Transverse colon (tissue), 4 donors: ENCODE measurements at regions of chr18 and their contacts with region 1.

Region 1: GRCh38 chr18:6885992-6886796 is 156.7 kb downstream of the ARHGAP28 start:
- DNase-seq: peak; percentile 14
- H3K4me3 ChIP-seq: no peak overlapping the region
- H3K27ac ChIP-seq: no peak overlapping the region
- H3K4me1 ChIP-seq: peaks cover 0 to 4% (median 0%) of the 10 kb centered on the region in 4 donors
- H3K27me3 ChIP-seq: no peaks in the 10 kb centered on the region
- CTCF ChIP-seq: peak; percentile 51 to 61 (median 57)
- EP300 ChIP-seq: no peak
- POLR2A ChIP-seq: no peak

Region 2: DNA sequence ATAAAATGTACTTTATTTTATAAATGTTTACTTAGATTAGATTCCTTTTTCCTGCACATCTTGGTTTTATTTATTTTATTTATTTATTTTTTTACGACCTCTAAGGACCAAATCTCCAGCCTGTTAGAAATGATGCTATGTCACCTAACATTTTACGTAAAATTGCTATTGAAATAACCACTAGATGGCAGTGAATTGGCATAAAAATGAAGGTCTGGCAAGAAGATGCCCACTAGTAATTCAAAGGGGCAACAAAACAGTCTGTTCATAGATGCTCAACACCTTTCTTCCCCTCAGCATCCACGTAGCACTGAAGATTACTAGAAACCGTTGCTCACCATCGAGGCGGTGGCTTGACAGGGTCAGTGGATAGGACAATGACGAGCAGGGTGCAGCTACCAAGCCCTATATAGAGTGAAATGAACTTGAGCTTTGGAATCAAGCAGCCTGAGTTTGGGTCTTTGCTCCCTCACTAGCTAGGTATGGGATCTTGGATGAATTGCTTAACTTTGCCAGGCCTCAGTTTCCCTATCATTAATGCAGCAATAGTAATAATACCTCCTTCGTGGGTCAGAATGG is 342.8 kb before region 1 on chr18:
- in situ Hi-C with region 1: loop called in 3 of 4 experiments (anchors 10 to 25 kb)
- intact Hi-C with region 1: loop called (anchors 2 kb)
- DNase-seq: no peak
- H3K4me3 ChIP-seq: no peak overlapping the region
- H3K27ac ChIP-seq: no peak overlapping the region
- H3K4me1 ChIP-seq: no peaks in the 10 kb centered on the region
- H3K27me3 ChIP-seq: no peaks in the 10 kb centered on the region
- CTCF ChIP-seq: peak; percentile 33 to 50 (median 42)
- EP300 ChIP-seq: no peak
- POLR2A ChIP-seq: no peak

Region 3: DNA sequence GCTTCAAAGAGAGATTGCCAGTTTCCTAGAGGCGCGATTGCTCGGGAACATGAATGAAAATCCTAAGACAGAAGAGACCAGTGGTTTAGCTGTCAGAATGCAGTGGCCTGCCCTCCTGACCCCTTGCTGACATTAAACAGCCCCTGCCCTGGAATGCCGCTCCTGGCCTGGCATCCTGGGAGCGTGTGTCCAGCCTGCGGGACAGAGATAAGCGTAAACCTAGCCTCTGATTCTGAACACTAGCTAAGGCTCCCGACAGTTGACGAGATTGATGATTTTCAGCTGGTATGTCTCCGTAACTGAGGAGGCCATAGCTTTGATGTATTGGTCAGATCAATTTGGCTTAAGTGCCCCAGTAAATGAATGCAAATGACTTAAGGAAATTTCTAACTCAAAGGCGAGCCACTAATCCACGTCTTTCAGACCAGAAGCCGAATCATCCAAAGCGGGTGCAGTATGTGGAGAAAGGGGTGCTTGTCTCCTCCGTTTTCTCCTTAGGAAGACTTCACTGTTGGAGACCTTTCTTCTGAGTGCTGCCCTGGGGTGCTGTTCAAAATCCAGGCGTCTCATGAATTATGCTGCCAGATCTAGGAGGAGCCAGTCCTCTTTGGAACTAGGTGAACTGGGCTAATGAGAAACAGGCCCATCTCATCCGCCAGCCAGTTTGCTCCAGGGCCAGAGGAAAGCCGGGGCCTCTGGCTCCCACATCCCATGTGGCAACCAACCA is 329.0 kb before region 1 on chr18:
- in situ Hi-C with region 1: loop called in 1 of 4 experiments (anchors 10 kb)
- intact Hi-C with region 1: no loop called
- DNase-seq: no peak
- H3K4me3 ChIP-seq: no peak overlapping the region
- H3K27ac ChIP-seq: no peak overlapping the region
- H3K4me1 ChIP-seq: no peaks in the 10 kb centered on the region
- H3K27me3 ChIP-seq: no peaks in the 10 kb centered on the region
- CTCF ChIP-seq: no peak
- EP300 ChIP-seq: no peak
- POLR2A ChIP-seq: no peak

Region 4: DNA sequence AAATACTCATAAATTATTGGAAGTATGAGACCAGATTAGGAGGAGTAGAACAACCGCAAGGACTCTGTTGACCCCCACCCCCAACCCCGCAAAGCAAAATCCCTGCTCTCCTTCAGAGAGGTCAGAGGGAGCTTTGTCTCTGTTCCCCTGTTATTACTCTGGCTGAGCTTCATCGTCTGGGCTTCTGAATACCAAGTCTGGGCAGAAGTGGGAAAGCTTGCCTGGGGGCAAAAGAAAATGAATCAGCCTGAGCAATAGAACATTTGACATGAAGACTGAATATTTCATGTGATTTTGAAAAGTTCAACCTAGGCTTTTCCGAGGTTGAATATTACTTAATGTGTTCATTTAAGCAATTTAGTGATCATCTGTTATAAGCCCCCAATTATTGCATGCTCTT is 271.2 kb before region 1 on chr18:
- in situ Hi-C with region 1: no loop called
- intact Hi-C with region 1: no loop called
- DNase-seq: no peak
- H3K4me3 ChIP-seq: no peak overlapping the region
- H3K27ac ChIP-seq: no peak overlapping the region
- H3K4me1 ChIP-seq: no peaks in the 10 kb centered on the region
- H3K27me3 ChIP-seq: no peaks in the 10 kb centered on the region
- CTCF ChIP-seq: no peak
- EP300 ChIP-seq: no peak
- POLR2A ChIP-seq: no peak